B cell (primary cell): ENCODE measurements at regions of chr3 and their contacts with region 1.

Region 1: DNA sequence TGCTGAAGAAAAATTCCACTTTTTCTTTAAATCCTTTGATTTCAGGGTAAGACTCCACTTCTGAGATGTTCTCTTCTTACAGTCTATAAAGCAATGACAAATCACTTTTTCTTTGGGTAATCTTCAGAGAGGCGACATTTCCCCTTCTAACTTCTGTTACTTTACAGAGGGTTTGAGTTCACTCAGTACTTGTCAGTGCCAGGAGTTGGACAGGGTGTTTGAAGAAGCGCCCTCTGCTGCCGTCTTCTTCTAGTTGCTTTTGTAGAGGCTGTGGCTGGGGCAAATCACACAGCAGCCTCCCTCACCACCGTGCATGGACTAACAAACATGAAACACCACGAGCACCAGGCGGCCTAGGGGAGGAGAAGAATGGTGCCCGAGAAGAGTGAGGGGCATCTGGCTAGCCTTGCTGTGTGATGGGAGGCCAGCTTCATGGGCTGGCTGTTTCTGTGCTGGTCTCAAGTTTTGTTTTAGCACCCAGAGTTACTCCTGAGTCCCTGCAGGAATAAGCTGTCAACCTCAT is at the start of gene CD80:
- DNase-seq: peak; percentile 85
- ATAC-seq: peak; percentile 60
- H3K4me3 ChIP-seq: peak within 1 kb of the TSS in 4 of 5 experiments; percentile 42 to 71 (median 60)
- H3K4me3 Mint-ChIP-seq: peak within 1 kb of the TSS; percentile 75
- H3K27ac ChIP-seq: peak within 1 kb of the TSS; percentile 71 to 92
- H3K27ac Mint-ChIP-seq: peak within 1 kb of the TSS; percentile 91
- H3K4me1 ChIP-seq: peaks cover 49 to 71% of the 10 kb centered on the region in 2 donors
- H3K4me1 Mint-ChIP-seq: peaks cover 80% of the 10 kb centered on the region
- H3K27me3 ChIP-seq: no peaks in the 10 kb centered on the region
- H3K27me3 Mint-ChIP-seq: no peaks in the 10 kb centered on the region
- CTCF ChIP-seq: peak; percentile 58
- total RNA-seq, gene CD80: 26.5 and 28.0 TPM in 2 replicates

Region 2: GRCh38 chr3:119279101-119279554 is 280.4 kb before region 1 on chr3:
- CTCF ChIA-PET with region 1: interaction called, 3 read pairs
- POLR2A ChIA-PET with region 1: no interaction called
- intact Hi-C with region 1: loop called (anchors 1 kb)
- DNase-seq: no peak
- ATAC-seq: no peak
- H3K4me3 ChIP-seq: no peak overlapping the region
- H3K4me3 Mint-ChIP-seq: no peak overlapping the region
- H3K27ac ChIP-seq: no peak overlapping the region
- H3K27ac Mint-ChIP-seq: no peak overlapping the region
- H3K4me1 ChIP-seq: no peaks in the 10 kb centered on the region
- H3K4me1 Mint-ChIP-seq: no peaks in the 10 kb centered on the region
- H3K27me3 ChIP-seq: no peaks in the 10 kb centered on the region
- H3K27me3 Mint-ChIP-seq: no peaks in the 10 kb centered on the region
- CTCF ChIP-seq: no peak

Region 3: GRCh38 chr3:119463171-119464169 is 96.0 kb before region 1 on chr3 and contains the start of gene TMEM39A:
- CTCF ChIA-PET with region 1: interaction called, 5 read pairs
- POLR2A ChIA-PET with region 1: interaction called, 10 read pairs
- intact Hi-C with region 1: loop called (anchors 1 kb)
- DNase-seq: peak; percentile 99
- ATAC-seq: peak; percentile 87
- H3K4me3 ChIP-seq: peak within 1 kb of the TSS; percentile 76 to 99 (median 85)
- H3K4me3 Mint-ChIP-seq: peak within 1 kb of the TSS; percentile 96
- H3K27ac ChIP-seq: peak within 1 kb of the TSS; percentile 68 to 88
- H3K27ac Mint-ChIP-seq: peak within 1 kb of the TSS; percentile 99
- H3K4me1 ChIP-seq: peaks cover 24 to 25% of the 10 kb centered on the region in 2 donors
- H3K4me1 Mint-ChIP-seq: peaks cover 37% of the 10 kb centered on the region
- H3K27me3 ChIP-seq: no peaks in the 10 kb centered on the region
- H3K27me3 Mint-ChIP-seq: no peaks in the 10 kb centered on the region
- CTCF ChIP-seq: no peak
- total RNA-seq, gene TMEM39A: 39.9 and 50.3 TPM in 2 replicates

Region 4: GRCh38 chr3:119524931-119525662 is 34.4 kb before region 1 on chr3:
- CTCF ChIA-PET with region 1: interaction called, 15 read pairs
- POLR2A ChIA-PET with region 1: no interaction called
- intact Hi-C with region 1: loop called (anchors 1 kb)
- DNase-seq: peak; percentile 46
- ATAC-seq: peak; percentile 60
- H3K4me3 ChIP-seq: no peak overlapping the region
- H3K4me3 Mint-ChIP-seq: no peak overlapping the region
- H3K27ac ChIP-seq: peak overlapping the region in 1 of 2 donors; percentile 14
- H3K27ac Mint-ChIP-seq: no peak overlapping the region
- H3K4me1 ChIP-seq: no peaks in the 10 kb centered on the region
- H3K4me1 Mint-ChIP-seq: no peaks in the 10 kb centered on the region
- H3K27me3 ChIP-seq: no peaks in the 10 kb centered on the region
- H3K27me3 Mint-ChIP-seq: no peaks in the 10 kb centered on the region
- CTCF ChIP-seq: peak; percentile 54

Region 5: GRCh38 chr3:119579366-119580165 is 20.1 kb after region 1 on chr3 and contains the start of gene ADPRH:
- CTCF ChIA-PET with region 1: interaction called, 7 read pairs
- POLR2A ChIA-PET with region 1: interaction called, 4 read pairs
- intact Hi-C with region 1: loop called (anchors 1 kb)
- DNase-seq: peak; percentile 81
- ATAC-seq: peak; percentile 76
- H3K4me3 ChIP-seq: peak within 1 kb of the TSS; percentile 64 to 94 (median 78)
- H3K4me3 Mint-ChIP-seq: peak within 1 kb of the TSS; percentile 99
- H3K27ac ChIP-seq: peak within 1 kb of the TSS; percentile 94 to 98
- H3K27ac Mint-ChIP-seq: peak within 1 kb of the TSS; percentile 100
- H3K4me1 ChIP-seq: peaks cover 12 to 19% of the 10 kb centered on the region in 2 donors
- H3K4me1 Mint-ChIP-seq: peaks cover 30% of the 10 kb centered on the region
- H3K27me3 ChIP-seq: no peaks in the 10 kb centered on the region
- H3K27me3 Mint-ChIP-seq: no peaks in the 10 kb centered on the region
- CTCF ChIP-seq: no peak
- total RNA-seq, gene ADPRH: 18.8 and 24.5 TPM in 2 replicates

Region 6: GRCh38 chr3:119628816-119629445 is 69.4 kb after region 1 on chr3:
- CTCF ChIA-PET with region 1: interaction called, 7 read pairs
- POLR2A ChIA-PET with region 1: no interaction called
- intact Hi-C with region 1: loop called (anchors 1 kb)
- DNase-seq: peak; percentile 76
- ATAC-seq: peak; percentile 61
- H3K4me3 ChIP-seq: no peak overlapping the region
- H3K4me3 Mint-ChIP-seq: peak overlapping the region; percentile 73
- H3K27ac ChIP-seq: peak overlapping the region; percentile 26 to 83
- H3K27ac Mint-ChIP-seq: peak overlapping the region; percentile 90
- H3K4me1 ChIP-seq: peaks cover 29 to 30% of the 10 kb centered on the region in 2 donors
- H3K4me1 Mint-ChIP-seq: peaks cover 46% of the 10 kb centered on the region
- H3K27me3 ChIP-seq: no peaks in the 10 kb centered on the region
- H3K27me3 Mint-ChIP-seq: no peaks in the 10 kb centered on the region
- CTCF ChIP-seq: no peak

Region 7: DNA sequence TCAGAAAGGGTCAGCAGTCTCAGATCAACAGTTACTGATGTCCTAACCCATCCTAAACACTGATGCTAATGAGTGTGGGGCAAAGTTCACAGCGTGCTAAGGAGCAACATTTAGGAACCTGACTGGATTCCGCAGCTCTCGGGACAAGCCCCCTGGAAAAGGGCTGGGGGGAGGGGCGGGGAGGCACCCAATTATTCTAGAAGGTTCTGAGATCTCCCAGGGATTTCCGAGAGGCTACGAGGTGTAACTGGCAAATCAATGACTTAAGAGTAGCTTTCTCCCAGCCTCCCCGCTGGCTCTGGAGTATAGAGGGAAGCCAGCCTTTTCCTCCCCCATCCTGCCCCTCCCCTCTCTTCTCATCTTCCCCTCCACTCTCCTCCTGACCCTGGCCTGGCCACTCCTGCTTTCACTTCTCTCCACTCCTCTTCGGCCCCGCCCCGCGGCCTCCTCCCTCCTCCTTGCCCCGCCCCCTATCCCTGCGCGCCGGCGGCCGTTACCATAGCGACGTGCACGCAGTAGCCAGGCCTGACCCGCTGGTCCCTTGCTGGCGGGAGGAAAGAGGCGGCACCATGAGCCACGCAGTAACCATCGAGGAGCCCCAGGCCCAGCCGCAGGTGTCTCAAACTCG is 143.1 kb after region 1 on chr3 and contains the start of gene CFAP91:
- CTCF ChIA-PET with region 1: no interaction called
- POLR2A ChIA-PET with region 1: no interaction called
- intact Hi-C with region 1: no loop called
- DNase-seq: peak; percentile 93
- ATAC-seq: peak; percentile 95
- H3K4me3 ChIP-seq: peak within 1 kb of the TSS in 4 of 5 experiments; percentile 47 to 67 (median 62)
- H3K4me3 Mint-ChIP-seq: peak within 1 kb of the TSS; percentile 88
- H3K27ac ChIP-seq: peak within 1 kb of the TSS in 1 of 2 donors; percentile 37
- H3K27ac Mint-ChIP-seq: peak within 1 kb of the TSS; percentile 82
- H3K4me1 ChIP-seq: peaks cover 25 to 32% of the 10 kb centered on the region in 2 donors
- H3K4me1 Mint-ChIP-seq: peaks cover 39% of the 10 kb centered on the region
- H3K27me3 ChIP-seq: no peaks in the 10 kb centered on the region
- H3K27me3 Mint-ChIP-seq: no peaks in the 10 kb centered on the region
- CTCF ChIP-seq: no peak
- total RNA-seq, gene CFAP91: 6.4 and 7.2 TPM in 2 replicates